WTC11 (cell line): ENCODE measurements at regions of chr19 and their contacts with region 1.

Region 1: DNA sequence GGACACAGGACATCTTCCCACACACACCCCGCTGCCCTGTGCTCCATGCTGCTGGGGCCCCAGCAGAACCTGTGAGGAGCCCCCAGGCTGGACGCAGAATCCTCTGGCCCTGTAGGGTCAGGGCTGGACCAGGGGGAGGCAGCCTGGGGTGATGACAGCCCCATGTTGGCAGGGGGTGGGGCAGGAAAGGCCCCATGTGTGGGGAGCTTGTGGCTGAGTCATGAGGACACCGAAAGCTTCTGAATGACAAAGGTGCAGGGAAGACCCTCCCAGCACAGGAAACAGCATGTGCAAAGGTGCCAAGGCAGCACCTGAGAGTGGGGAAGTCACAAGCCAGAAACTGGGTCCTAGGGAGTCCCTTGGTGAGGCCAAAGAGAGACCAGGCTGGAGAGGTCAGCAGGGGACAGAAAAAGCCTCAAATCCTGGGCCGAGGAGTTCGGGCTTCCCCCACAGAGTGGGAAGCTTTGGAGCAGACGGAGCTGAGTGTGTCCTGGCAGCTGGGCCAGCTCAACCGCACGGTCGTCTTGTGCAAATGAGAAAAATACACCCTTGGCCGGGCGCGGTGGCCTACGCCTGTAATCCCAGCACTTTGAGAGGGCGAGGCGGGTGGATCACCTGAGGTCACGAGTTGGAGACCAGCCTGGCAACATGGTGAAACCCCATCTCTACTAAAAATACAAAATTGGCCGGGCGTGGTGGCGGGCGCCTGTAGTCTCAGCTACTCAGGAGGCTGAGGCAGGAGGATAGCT is 17.5 kb downstream of the ATP8B3 start:
- DNase-seq: no peak
- ATAC-seq: no peak; the same call in 1 of the 2 replicates
- H3K4me3 Mint-ChIP-seq: no peak overlapping the region
- H3K27ac Mint-ChIP-seq: peak overlapping the region; percentile 45; the same call in 1 of the 2 replicates
- H3K4me1 Mint-ChIP-seq: peaks cover 12% of the 10 kb centered on the region
- H3K27me3 Mint-ChIP-seq: peaks cover 10% of the 10 kb centered on the region
- CTCF ChIP-seq: no peak

Region 2: DNA sequence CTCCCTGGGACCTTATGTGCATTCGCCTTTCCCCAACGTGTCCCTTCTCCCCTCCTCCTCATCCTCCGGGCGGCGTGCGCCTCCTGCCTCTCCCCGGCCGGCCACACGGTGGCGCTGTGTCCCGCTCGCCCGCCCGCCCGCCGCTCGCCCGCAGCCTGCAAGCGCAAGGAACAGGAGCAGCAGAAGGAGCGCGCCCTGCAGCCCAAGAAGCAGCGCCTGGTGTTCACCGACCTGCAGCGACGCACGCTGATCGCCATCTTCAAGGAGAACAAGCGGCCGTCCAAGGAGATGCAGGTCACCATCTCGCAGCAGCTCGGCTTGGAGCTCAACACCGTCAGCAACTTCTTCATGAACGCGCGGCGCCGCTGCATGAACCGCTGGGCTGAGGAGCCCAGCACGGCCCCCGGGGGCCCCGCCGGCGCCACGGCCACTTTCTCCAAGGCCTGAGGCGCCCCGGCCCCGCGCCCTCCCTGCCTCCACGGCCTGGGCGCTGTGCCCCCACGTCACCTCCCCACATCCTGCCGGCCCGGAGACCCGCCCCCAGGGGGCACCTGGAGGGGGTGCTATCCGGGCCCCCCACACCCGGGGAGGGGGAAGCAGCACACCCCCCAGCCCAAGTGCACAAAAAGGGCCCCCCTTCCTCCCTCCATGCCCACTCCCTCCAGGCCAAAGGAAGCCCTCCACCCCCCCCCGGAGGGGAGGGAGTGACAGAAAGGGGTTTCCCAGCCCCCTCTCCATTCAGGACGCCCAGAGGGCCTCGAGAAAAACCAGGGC is 19.4 kb before region 1 on chr19:
- CTCF ChIA-PET with region 1: interaction called, 49 read pairs
- POLR2A ChIA-PET with region 1: interaction called, 4 read pairs
- DNase-seq: peak; percentile 72
- ATAC-seq: peak; percentile 85
- H3K4me3 Mint-ChIP-seq: peak overlapping the region; percentile 58
- H3K27ac Mint-ChIP-seq: no peak overlapping the region
- H3K4me1 Mint-ChIP-seq: peaks cover 16% of the 10 kb centered on the region
- H3K27me3 Mint-ChIP-seq: peaks cover 98% of the 10 kb centered on the region
- CTCF ChIP-seq: peak; percentile 98

Region 3: GRCh38 chr19:1780272-1780958 is 14.2 kb before region 1 on chr19:
- CTCF ChIA-PET with region 1: interaction called, 49 read pairs
- POLR2A ChIA-PET with region 1: interaction called, 4 read pairs
- DNase-seq: no peak
- ATAC-seq: no peak
- H3K4me3 Mint-ChIP-seq: no peak overlapping the region
- H3K27ac Mint-ChIP-seq: no peak overlapping the region
- H3K4me1 Mint-ChIP-seq: peaks cover 16% of the 10 kb centered on the region
- H3K27me3 Mint-ChIP-seq: peaks cover 86% of the 10 kb centered on the region
- CTCF ChIP-seq: no peak

Region 4: GRCh38 chr19:1848399-1849131 is 54.0 kb after region 1 on chr19 and contains the start of gene REXO1:
- CTCF ChIA-PET with region 1: no interaction called
- POLR2A ChIA-PET with region 1: no interaction called
- DNase-seq: peak; percentile 99
- ATAC-seq: peak; percentile 46
- H3K4me3 Mint-ChIP-seq: peak within 1 kb of the TSS; percentile 93
- H3K27ac Mint-ChIP-seq: peak within 1 kb of the TSS; percentile 97
- H3K4me1 Mint-ChIP-seq: peaks cover 25% of the 10 kb centered on the region
- H3K27me3 Mint-ChIP-seq: no peaks in the 10 kb centered on the region
- CTCF ChIP-seq: peak; percentile 92
- total RNA-seq, gene REXO1: 48.9 to 61.1 TPM (median 50.1 TPM) in 3 replicates

Region 5: GRCh38 chr19:1875646-1876495 is 81.3 kb after region 1 on chr19:
- CTCF ChIA-PET with region 1: no interaction called
- POLR2A ChIA-PET with region 1: no interaction called
- DNase-seq: peak; percentile 88
- ATAC-seq: peak; percentile 84
- H3K4me3 Mint-ChIP-seq: peak overlapping the region; percentile 99
- H3K27ac Mint-ChIP-seq: peak overlapping the region; percentile 86
- H3K4me1 Mint-ChIP-seq: peaks cover 16% of the 10 kb centered on the region
- H3K27me3 Mint-ChIP-seq: no peaks in the 10 kb centered on the region
- CTCF ChIP-seq: no peak